GM12878 (cell line): ENCODE measurements at regions of chr6 and their contacts with region 1.

Region 1: DNA sequence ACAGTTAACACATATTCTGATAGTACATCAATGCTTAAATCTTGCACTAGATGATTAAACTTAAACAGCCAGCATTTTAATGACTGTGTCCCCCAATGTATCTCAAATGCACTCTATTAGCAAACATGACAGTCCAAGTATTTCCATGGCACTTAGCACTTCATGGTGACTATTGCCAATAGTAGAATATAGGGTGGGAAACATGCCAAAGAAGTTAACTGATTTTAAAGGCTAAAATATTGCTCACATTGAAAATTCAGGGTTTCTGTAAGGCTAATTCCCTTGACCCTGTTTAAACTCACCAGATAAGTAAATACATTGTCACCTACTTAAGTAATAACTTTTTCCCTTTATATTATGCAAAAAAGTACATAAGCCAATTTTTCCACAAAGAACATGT is 266.9 kb downstream of the TBC1D32 start:
- DNase-seq: no peak
- ATAC-seq: no peak
- H3K4me3 ChIP-seq: no peak overlapping the region
- H3K27ac ChIP-seq: no peak overlapping the region
- H3K4me1 ChIP-seq: no peaks in the 10 kb centered on the region
- H3K27me3 ChIP-seq: no peaks in the 10 kb centered on the region
- CTCF ChIP-seq: no peak
- EP300 ChIP-seq: no peak
- POLR2A ChIP-seq: no peak
- RAD21 ChIP-seq: no peak

Region 2: DNA sequence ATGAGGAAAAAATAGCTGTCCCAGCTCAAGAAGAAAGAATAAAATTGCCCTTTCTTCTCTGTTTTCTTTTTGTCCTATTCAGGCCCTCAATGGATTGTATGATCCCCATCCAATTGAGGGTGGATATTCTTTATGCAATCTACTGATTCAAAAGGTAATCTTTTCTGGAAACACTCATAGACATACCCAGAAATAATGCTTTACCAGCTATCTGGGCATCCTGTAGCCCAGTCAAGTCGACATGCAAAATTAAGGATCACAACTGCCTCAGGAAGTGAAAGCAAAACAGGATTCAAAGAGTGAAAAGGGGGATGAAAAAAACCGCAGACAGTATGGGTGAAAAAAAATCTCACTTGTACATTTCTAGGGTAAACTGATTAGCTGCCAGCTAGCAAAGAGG is 143.2 kb before region 1 on chr6:
- CTCF ChIA-PET with region 1: no interaction called
- POLR2A ChIA-PET with region 1: no interaction called
- RAD21 ChIA-PET with region 1: no interaction called
- SMC1A ChIA-PET with region 1: no interaction called
- in situ Hi-C with region 1: no loop called
- intact Hi-C with region 1: no loop called
- DNase-seq: no peak
- ATAC-seq: no peak
- H3K4me3 ChIP-seq: no peak overlapping the region
- H3K27ac ChIP-seq: no peak overlapping the region
- H3K4me1 ChIP-seq: no peaks in the 10 kb centered on the region
- H3K27me3 ChIP-seq: no peaks in the 10 kb centered on the region
- CTCF ChIP-seq: no peak
- EP300 ChIP-seq: no peak
- POLR2A ChIP-seq: no peak
- RAD21 ChIP-seq: no peak

Region 3: GRCh38 chr6:121093928-121094327 is 26.5 kb after region 1 on chr6:
- CTCF ChIA-PET with region 1: no interaction called
- POLR2A ChIA-PET with region 1: no interaction called
- RAD21 ChIA-PET with region 1: no interaction called
- SMC1A ChIA-PET with region 1: no interaction called
- in situ Hi-C with region 1: no loop called
- intact Hi-C with region 1: no loop called
- DNase-seq: no peak
- ATAC-seq: no peak
- H3K4me3 ChIP-seq: no peak overlapping the region
- H3K27ac ChIP-seq: no peak overlapping the region
- H3K4me1 ChIP-seq: no peaks in the 10 kb centered on the region
- H3K27me3 ChIP-seq: no peaks in the 10 kb centered on the region
- CTCF ChIP-seq: no peak
- EP300 ChIP-seq: no peak
- POLR2A ChIP-seq: no peak
- RAD21 ChIP-seq: no peak

Region 4: GRCh38 chr6:122020588-122021264 is 953.3 kb after region 1 on chr6:
- CTCF ChIA-PET with region 1: no interaction called
- POLR2A ChIA-PET with region 1: no interaction called
- RAD21 ChIA-PET with region 1: no interaction called
- SMC1A ChIA-PET with region 1: no interaction called
- in situ Hi-C with region 1: loop called (anchors 10 kb)
- intact Hi-C with region 1: no loop called
- DNase-seq: peak; percentile 13
- ATAC-seq: peak; percentile 90
- H3K4me3 ChIP-seq: no peak overlapping the region
- H3K27ac ChIP-seq: no peak overlapping the region
- H3K4me1 ChIP-seq: no peaks in the 10 kb centered on the region
- H3K27me3 ChIP-seq: no peaks in the 10 kb centered on the region
- CTCF ChIP-seq: no peak
- EP300 ChIP-seq: no peak
- POLR2A ChIP-seq: no peak
- RAD21 ChIP-seq: no peak